Activated naive CD8-positive, alpha-beta T cell treated with anti-CD3 and anti-CD28 coated beads, Interleukin-2, amount 10 ng/mL, durations not matched to agents 7 days and 5 days (primary cell): ENCODE measurements at regions of chr17 and their contacts with region 1.

Region 1: DNA sequence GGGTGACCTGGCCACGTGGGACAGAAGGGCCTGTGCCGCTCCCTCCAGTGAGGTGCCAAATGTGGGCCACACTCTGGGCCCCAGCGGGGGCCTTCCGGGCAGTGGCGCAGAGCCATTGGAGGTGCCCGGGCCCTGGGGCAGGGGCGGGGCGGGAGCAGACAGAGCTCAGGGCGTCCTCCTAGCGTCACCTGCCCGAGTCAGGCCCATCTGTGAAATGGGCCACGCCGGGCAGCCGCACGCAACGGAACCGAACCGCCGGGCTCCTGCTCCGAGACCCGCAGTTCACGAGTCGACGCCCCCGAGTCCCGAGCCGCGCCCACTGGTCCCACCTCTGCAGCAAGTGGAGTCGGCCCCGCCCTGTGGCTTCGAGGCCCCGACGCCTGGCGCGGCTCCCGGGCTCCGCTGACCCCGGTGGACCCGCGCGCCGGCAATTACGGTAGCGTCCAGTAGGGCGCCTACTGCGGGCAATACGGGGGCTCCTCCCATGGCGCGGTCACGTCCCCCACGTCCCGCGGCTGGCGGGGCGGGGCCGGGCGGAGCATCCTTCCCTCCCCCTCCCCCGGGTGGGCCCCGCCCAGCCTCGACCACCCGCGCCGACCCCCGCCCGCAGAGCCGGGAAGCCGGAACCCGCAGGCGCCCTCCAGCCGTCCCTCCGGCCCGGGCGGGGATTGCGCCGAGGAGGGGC is 1.9 kb downstream of the SLC16A3 start:
- DNase-seq: peak; percentile 86
- ATAC-seq: peak; percentile 37
- H3K4me3 Mint-ChIP-seq: peak overlapping the region; percentile 97
- H3K27ac Mint-ChIP-seq: peak overlapping the region; percentile 88
- H3K4me1 Mint-ChIP-seq: peaks cover 11% of the 10 kb centered on the region
- H3K27me3 Mint-ChIP-seq: no peaks in the 10 kb centered on the region

Region 2: GRCh38 chr17:82205719-82206508 is 24.9 kb before region 1 on chr17:
- POLR2A ChIA-PET with region 1: interaction called, 51 read pairs
- DNase-seq: peak; percentile 85
- ATAC-seq: peak; percentile 75
- H3K4me3 Mint-ChIP-seq: peak overlapping the region; percentile 75
- H3K27ac Mint-ChIP-seq: peak overlapping the region; percentile 97
- H3K4me1 Mint-ChIP-seq: peaks cover 50% of the 10 kb centered on the region
- H3K27me3 Mint-ChIP-seq: no peaks in the 10 kb centered on the region

Region 3: DNA sequence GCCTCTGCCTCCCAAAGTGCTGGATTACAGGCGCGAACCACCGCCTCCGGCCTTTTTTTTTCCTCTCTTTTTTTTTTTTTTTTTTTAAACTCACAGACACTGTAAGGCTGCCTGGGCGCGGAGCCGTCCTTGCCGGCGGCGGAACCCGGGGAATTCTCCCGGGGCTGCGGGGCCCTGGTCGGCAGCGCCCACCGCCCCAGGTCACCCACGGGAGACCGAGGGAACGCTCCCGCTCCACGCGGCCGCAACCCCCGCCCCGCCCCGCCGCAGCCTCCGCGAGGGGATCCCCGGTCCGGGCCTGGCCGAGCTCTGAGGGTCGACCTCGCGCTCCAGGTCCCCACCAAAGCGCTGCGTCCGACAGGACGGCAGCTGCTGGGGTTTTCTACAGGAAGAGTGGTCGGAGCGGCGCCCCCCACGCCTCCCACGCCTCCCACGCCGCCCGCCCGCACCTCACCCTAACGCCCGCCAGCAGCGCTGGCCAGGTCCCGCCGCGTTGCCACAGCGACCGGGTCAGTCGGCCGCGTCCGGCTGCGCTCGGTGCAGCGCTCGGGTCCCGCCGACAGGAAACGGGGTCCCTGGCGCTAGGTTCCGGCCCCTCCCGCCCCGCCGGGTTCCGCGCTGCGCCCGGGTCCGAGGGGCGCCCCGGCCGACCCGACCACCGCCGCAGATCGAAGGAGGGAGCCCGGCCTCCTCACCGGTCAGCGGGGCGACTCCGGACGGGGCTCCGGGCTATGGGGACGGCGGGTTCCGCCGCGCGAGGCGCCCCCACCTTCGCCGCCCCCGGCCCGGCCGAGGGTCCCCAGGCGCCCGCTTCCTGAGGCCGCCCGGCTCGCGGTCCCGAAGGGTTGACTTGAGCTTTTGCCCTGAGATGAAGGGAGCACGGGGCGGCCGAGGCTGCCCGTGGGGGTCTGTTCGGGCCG is 18.2 kb before region 1 on chr17 and contains the start of gene CCDC57:
- POLR2A ChIA-PET with region 1: interaction called, 16 read pairs
- DNase-seq: peak; percentile 86
- ATAC-seq: peak; percentile 76
- H3K4me3 Mint-ChIP-seq: peak within 1 kb of the TSS; percentile 83
- H3K27ac Mint-ChIP-seq: peak within 1 kb of the TSS; percentile 86
- H3K4me1 Mint-ChIP-seq: peaks cover 32% of the 10 kb centered on the region
- H3K27me3 Mint-ChIP-seq: no peaks in the 10 kb centered on the region
- total RNA-seq, gene CCDC57: 79.5 to 81.7 TPM

Region 4: DNA sequence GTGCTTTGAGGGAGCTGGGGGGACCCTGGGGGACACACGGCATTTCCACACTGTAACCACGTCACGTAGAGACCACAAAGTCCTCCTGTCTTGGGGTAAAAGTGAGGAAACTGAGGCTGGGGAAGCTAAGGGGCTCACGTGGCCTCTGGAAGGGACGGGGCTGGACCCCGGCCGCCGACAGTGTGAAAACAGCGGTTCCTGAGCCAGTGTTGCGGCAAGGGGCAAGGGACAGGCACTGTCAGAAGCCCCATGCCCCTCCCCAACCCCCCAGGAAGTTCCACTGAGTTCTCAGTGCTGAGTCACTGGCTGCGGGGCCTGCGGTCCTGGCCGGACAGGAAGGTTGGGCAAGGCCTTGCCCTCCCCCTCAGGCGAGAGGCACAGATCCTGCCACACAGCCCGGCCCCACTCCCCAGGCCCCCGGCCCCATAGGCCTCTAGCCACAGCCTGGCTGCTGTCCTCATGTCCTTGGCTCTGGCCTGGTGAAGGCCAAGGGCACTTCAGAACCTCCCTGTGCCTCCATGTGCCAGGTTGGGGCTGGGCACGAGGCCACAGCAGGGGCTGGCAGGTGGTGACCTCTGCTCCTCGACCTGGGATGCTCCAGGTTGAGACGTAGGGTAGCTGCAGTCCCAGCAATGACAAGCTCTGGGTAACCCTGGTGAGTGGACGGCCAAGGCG is 13.1 kb before region 1 on chr17:
- POLR2A ChIA-PET with region 1: interaction called, 16 read pairs
- DNase-seq: peak; percentile 34
- ATAC-seq: no peak
- H3K4me3 Mint-ChIP-seq: no peak overlapping the region
- H3K27ac Mint-ChIP-seq: no peak overlapping the region
- H3K4me1 Mint-ChIP-seq: peaks cover 19% of the 10 kb centered on the region
- H3K27me3 Mint-ChIP-seq: peaks cover under 1% of the 10 kb centered on the region

Region 5: GRCh38 chr17:82257473-82257872 is 26.7 kb after region 1 on chr17:
- POLR2A ChIA-PET with region 1: no interaction called
- DNase-seq: no peak
- ATAC-seq: peak; percentile 67
- H3K4me3 Mint-ChIP-seq: no peak overlapping the region
- H3K27ac Mint-ChIP-seq: peak overlapping the region; percentile 73
- H3K4me1 Mint-ChIP-seq: peaks cover 8% of the 10 kb centered on the region
- H3K27me3 Mint-ChIP-seq: no peaks in the 10 kb centered on the region

Region 6: GRCh38 chr17:82297714-82298537 is 67.2 kb after region 1 on chr17:
- POLR2A ChIA-PET with region 1: interaction called, 21 read pairs
- DNase-seq: peak; percentile 84
- ATAC-seq: peak; percentile 64
- H3K4me3 Mint-ChIP-seq: peak overlapping the region; percentile 89
- H3K27ac Mint-ChIP-seq: peak overlapping the region; percentile 100
- H3K4me1 Mint-ChIP-seq: peaks cover 66% of the 10 kb centered on the region
- H3K27me3 Mint-ChIP-seq: no peaks in the 10 kb centered on the region

Region 7: DNA sequence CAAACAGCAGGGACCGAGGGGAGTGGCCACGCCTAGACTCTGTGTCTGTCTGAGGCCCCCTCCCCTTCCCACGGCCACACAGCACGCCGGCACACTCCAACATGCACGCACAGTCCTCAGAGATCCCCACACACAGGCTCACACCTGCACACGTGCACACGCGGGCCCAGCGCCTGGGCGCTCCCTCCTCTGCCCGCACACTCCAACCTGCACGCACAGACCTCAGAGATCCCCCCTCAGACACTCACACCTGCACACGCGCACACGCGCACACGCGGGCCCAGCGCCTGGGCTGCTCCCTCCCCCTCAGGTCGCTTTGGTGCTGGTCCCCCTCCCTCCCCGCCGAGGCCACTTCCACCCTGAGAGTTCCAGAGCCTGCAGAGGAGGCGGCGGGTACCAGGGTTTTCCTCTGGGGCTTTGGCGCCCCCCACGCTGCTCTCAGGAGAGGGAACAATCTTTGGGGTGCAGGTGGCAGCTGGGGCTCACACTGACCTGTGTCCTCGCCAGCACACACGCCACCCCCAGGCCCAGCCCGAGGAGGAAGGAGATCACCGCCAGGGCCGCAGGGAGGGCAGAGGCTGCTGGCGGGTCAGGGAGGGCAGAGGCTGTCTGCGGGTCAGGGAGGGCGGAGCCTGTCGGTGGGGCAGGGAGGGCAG is 85.1 kb after region 1 on chr17:
- POLR2A ChIA-PET with region 1: interaction called, 10 read pairs
- DNase-seq: peak; percentile 72
- ATAC-seq: peak; percentile 45
- H3K4me3 Mint-ChIP-seq: peak overlapping the region; percentile 90
- H3K27ac Mint-ChIP-seq: no peak overlapping the region
- H3K4me1 Mint-ChIP-seq: peaks cover 9% of the 10 kb centered on the region
- H3K27me3 Mint-ChIP-seq: no peaks in the 10 kb centered on the region